ENCODE measurements at regions of chr16 and their contacts with region 1.

Region 1: DNA sequence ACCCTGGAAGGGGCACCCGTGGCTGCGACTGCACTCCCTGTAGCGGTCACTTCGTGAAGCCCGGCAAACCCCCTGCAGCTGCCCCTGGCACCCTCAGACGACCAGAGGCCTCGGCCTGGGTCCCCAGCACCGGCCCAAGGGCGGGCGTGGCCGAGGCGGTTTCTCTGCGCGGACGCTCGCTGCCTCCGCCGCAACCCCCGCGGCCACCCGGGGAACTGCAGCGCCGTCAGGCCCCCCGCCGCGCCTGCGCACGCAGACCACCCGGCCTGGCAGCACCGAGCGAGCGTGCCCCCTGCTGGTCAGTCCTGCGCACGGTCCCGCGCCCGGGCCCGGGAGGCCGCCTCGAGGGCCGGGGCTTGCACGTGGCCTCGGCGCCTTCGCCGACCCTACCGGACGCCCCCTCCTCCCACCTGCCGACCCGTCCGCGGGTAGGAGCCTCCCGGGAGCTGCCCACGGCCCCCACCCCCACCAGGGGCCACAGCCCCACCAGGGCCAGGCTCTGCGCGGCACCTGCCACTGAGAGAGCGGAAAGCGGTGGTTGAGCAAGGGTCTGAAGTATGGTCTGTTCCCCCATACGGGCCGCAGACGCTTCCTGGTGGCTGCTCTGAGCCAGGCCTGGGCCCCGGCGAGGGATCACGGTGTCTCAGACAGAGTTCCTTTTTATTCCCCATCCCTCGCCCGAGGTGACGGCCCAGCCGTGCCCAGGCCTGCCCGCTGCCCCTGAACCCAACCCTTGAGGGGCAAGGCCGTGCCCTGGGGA is 11.5 kb upstream of the HS3ST6 start:
- DNase-seq: peak; percentile 89 to 94 (median 90)
- ATAC-seq: peak; percentile 91
- H3K4me3 ChIP-seq: peak overlapping the region; percentile 6 to 24
- H3K27ac ChIP-seq: peak overlapping the region in 3 of 4 donors; percentile 64 to 80 (median 73)
- H3K4me1 ChIP-seq: peaks cover 35% of the 10 kb centered on the region
- H3K27me3 ChIP-seq: no peaks in the 10 kb centered on the region
- CTCF ChIP-seq: peak; percentile 67 to 100 (median 100)
- POLR2A ChIP-seq: peak in 2 of 3 donors; percentile 44 to 58

Region 2: GRCh38 chr16:1859650-1860049 is 70.1 kb before region 1 on chr16:
- intact Hi-C with region 1: loop called (anchors 5 kb)
- DNase-seq: no peak
- ATAC-seq: no peak
- H3K4me3 ChIP-seq: no peak overlapping the region
- H3K27ac ChIP-seq: no peak overlapping the region
- H3K4me1 ChIP-seq: no peaks in the 10 kb centered on the region
- H3K27me3 ChIP-seq: no peaks in the 10 kb centered on the region
- CTCF ChIP-seq: no peak
- POLR2A ChIP-seq: no peak